Mammary epithelial cell (primary cell): ENCODE measurements at regions of chr2 and their contacts with region 1.

Region 1: GRCh38 chr2:209423562-209424198 is at the start of gene MAP2:
- DNase-seq: peak; percentile 79
- H3K4me3 ChIP-seq: peak within 1 kb of the TSS; percentile 58 to 91 (median 91)
- H3K27ac ChIP-seq: peak within 1 kb of the TSS; percentile 68
- H3K4me1 ChIP-seq: peaks cover 20% of the 10 kb centered on the region
- H3K27me3 ChIP-seq: no peaks in the 10 kb centered on the region
- CTCF ChIP-seq: peak; percentile 57 to 77
- total RNA-seq, gene MAP2: 10.5 to 31.5 TPM

Region 2: GRCh38 chr2:208392300-208393080 is 1031.2 kb before region 1 on chr2:
- CTCF ChIA-PET with region 1: no interaction called
- dilution Hi-C with region 1: no loop called
- in situ Hi-C with region 1: no loop called
- intact Hi-C with region 1: loop called (anchors 2 kb)
- DNase-seq: no peak
- H3K4me3 ChIP-seq: no peak overlapping the region
- H3K27ac ChIP-seq: no peak overlapping the region
- H3K4me1 ChIP-seq: no peaks in the 10 kb centered on the region
- H3K27me3 ChIP-seq: no peaks in the 10 kb centered on the region
- CTCF ChIP-seq: peak; percentile 17 to 20

Region 3: DNA sequence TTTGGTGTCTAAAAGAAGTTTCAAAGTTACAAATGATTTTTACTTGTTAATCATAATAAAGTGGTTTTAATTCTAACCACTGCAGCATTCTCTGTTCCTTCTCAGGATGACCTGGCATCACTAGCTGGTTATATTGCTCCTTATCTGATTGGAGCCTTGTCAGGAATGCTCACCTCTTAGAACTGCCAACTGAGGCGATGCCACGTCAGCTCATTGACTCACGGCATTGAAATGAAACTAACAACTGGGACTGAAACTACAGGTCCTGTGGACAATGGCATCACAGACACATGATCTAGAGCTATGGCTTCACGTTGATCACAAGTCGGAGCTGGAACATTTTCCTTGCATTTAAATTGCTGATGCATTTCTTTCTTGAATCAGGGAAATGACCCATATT is 54.8 kb before region 1 on chr2:
- CTCF ChIA-PET with region 1: interaction called, 6 read pairs
- dilution Hi-C with region 1: no loop called
- in situ Hi-C with region 1: no loop called
- intact Hi-C with region 1: loop called (anchors 2 kb)
- DNase-seq: peak; percentile 100
- H3K4me3 ChIP-seq: peak overlapping the region in 1 of 3 experiments; percentile 21
- H3K27ac ChIP-seq: peak overlapping the region; percentile 97
- H3K4me1 ChIP-seq: peaks cover 35% of the 10 kb centered on the region
- H3K27me3 ChIP-seq: no peaks in the 10 kb centered on the region
- CTCF ChIP-seq: no peak

Region 4: GRCh38 chr2:209473930-209474419 is 50.3 kb after region 1 on chr2:
- CTCF ChIA-PET with region 1: no interaction called
- dilution Hi-C with region 1: no loop called
- in situ Hi-C with region 1: no loop called
- intact Hi-C with region 1: loop called (anchors 2 kb)
- DNase-seq: peak; percentile 88
- H3K4me3 ChIP-seq: no peak overlapping the region
- H3K27ac ChIP-seq: no peak overlapping the region
- H3K4me1 ChIP-seq: peaks cover 24% of the 10 kb centered on the region
- H3K27me3 ChIP-seq: no peaks in the 10 kb centered on the region
- CTCF ChIP-seq: no peak

Region 5: GRCh38 chr2:209556354-209556961 is 132.8 kb after region 1 on chr2:
- CTCF ChIA-PET with region 1: no interaction called
- dilution Hi-C with region 1: no loop called
- in situ Hi-C with region 1: loop called (anchors 10 kb)
- intact Hi-C with region 1: loop called (anchors 1 kb)
- DNase-seq: peak; percentile 40
- H3K4me3 ChIP-seq: no peak overlapping the region
- H3K27ac ChIP-seq: no peak overlapping the region
- H3K4me1 ChIP-seq: no peaks in the 10 kb centered on the region
- H3K27me3 ChIP-seq: no peaks in the 10 kb centered on the region
- CTCF ChIP-seq: peak; percentile 42 to 74

Region 6: GRCh38 chr2:209638346-209638745 is 214.7 kb after region 1 on chr2:
- CTCF ChIA-PET with region 1: no interaction called
- dilution Hi-C with region 1: no loop called
- in situ Hi-C with region 1: no loop called
- intact Hi-C with region 1: loop called (anchors 5 kb)
- DNase-seq: peak; percentile 73
- H3K4me3 ChIP-seq: no peak overlapping the region
- H3K27ac ChIP-seq: no peak overlapping the region
- H3K4me1 ChIP-seq: peaks cover 48% of the 10 kb centered on the region
- H3K27me3 ChIP-seq: no peaks in the 10 kb centered on the region
- CTCF ChIP-seq: no peak

Region 7: DNA sequence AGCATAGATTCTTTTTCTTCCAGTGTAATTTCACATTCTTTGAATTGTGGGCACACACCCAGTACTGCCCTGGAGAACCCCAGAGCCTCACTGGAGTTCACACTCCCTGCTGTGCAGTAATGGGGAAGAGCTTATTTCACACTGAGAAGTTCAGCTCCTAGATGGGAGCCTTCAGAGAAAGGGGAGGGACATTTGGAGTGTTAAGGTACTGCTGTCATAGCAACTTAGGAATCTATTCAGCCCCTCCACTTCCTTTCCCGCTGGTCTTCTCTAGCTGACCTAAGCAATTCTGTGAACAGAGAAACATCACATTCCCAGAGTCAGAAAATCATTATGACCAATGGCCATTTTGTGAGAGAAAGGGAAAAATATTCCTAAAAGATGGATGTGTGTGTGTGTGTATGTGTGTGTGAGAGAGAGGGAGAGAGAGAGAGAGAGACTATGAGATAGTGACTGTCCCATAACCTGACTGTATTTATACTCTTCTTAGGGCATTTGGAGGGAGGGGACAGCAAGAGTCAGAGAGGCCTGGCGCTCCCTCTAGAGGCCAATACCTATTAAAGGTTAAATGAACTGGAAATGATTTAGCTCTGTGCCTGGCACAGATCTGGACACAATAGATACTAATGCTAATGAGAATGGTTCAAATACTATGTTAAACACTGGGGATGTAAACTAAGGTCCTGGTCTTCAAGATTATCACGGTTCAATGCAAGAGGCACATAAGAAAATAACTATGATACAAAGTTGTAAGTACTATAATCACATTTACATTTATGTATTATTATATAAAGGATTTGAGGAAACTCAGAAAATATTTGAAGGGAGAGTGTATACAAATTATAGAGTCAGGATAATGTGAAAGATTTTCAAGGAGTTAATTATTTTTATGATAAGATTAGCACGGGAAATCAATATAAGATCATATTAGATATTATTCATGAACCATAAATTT is 537.3 kb after region 1 on chr2:
- CTCF ChIA-PET with region 1: interaction called, 5 read pairs
- dilution Hi-C with region 1: no loop called
- in situ Hi-C with region 1: no loop called
- intact Hi-C with region 1: loop called (anchors 2 kb)
- DNase-seq: peak; percentile 19
- H3K4me3 ChIP-seq: no peak overlapping the region
- H3K27ac ChIP-seq: no peak overlapping the region
- H3K4me1 ChIP-seq: no peaks in the 10 kb centered on the region
- H3K27me3 ChIP-seq: peaks cover 2% of the 10 kb centered on the region
- CTCF ChIP-seq: peak; percentile 76 to 79